ENCODE measurements at regions of chr6 and their contacts with region 1.

Region 1: GRCh38 chr6:38493931-38494547 is 145.7 kb downstream of the BTBD9 start:
- DNase-seq: peak; percentile 70
- ATAC-seq: peak; percentile 53; the same call in 2 of the 3 replicates
- H3K4me3 ChIP-seq: no peak overlapping the region
- H3K27ac ChIP-seq: no peak overlapping the region
- H3K4me1 ChIP-seq: no peaks in the 10 kb centered on the region
- H3K27me3 ChIP-seq: no peaks in the 10 kb centered on the region
- CTCF ChIP-seq: peak; percentile 88
- EP300 ChIP-seq: no peak
- POLR2A ChIP-seq: no peak
- RAD21 ChIP-seq: peak; percentile 78

Region 2: GRCh38 chr6:36533321-36533720 is 1960.7 kb before region 1 on chr6:
- CTCF ChIA-PET with region 1: no interaction called
- POLR2A ChIA-PET with region 1: no interaction called
- in situ Hi-C with region 1: no loop called
- intact Hi-C with region 1: no loop called
- DNase-seq: no peak
- ATAC-seq: no peak
- H3K4me3 ChIP-seq: no peak overlapping the region
- H3K27ac ChIP-seq: no peak overlapping the region
- H3K4me1 ChIP-seq: no peaks in the 10 kb centered on the region
- H3K27me3 ChIP-seq: no peaks in the 10 kb centered on the region
- CTCF ChIP-seq: no peak
- EP300 ChIP-seq: no peak
- POLR2A ChIP-seq: no peak
- RAD21 ChIP-seq: no peak

Region 3: GRCh38 chr6:37741757-37742400 is 752.2 kb before region 1 on chr6:
- CTCF ChIA-PET with region 1: interaction called, 11 read pairs
- POLR2A ChIA-PET with region 1: no interaction called
- in situ Hi-C with region 1: loop called (anchors 25 kb)
- intact Hi-C with region 1: loop called (anchors 1 kb)
- DNase-seq: peak; percentile 30
- ATAC-seq: peak; percentile 94
- H3K4me3 ChIP-seq: peak overlapping the region in 2 of 3 experiments; percentile 36 to 38; a peak in 2 of 6 replicates
- H3K27ac ChIP-seq: no peak overlapping the region
- H3K4me1 ChIP-seq: peaks cover 9% of the 10 kb centered on the region
- H3K27me3 ChIP-seq: peaks cover 0 to 32% of the 10 kb centered on the region in 2 experiments; a peak in 2 of 5 replicates
- CTCF ChIP-seq: peak; percentile 70
- EP300 ChIP-seq: no peak
- POLR2A ChIP-seq: no peak
- RAD21 ChIP-seq: peak; percentile 79

Region 4: GRCh38 chr6:38018755-38019165 is 475.3 kb before region 1 on chr6:
- CTCF ChIA-PET with region 1: no interaction called
- POLR2A ChIA-PET with region 1: no interaction called
- in situ Hi-C with region 1: no loop called
- intact Hi-C with region 1: loop called (anchors 5 kb)
- DNase-seq: peak; percentile 72
- ATAC-seq: peak; percentile 76
- H3K4me3 ChIP-seq: no peak overlapping the region
- H3K27ac ChIP-seq: peak overlapping the region; percentile 22
- H3K4me1 ChIP-seq: peaks cover 11% of the 10 kb centered on the region
- H3K27me3 ChIP-seq: no peaks in the 10 kb centered on the region
- CTCF ChIP-seq: peak; percentile 46
- EP300 ChIP-seq: no peak
- POLR2A ChIP-seq: no peak
- RAD21 ChIP-seq: 0 out of 2 replicates have a peak, but pooled peaks have one; percentile 25

Region 5: DNA sequence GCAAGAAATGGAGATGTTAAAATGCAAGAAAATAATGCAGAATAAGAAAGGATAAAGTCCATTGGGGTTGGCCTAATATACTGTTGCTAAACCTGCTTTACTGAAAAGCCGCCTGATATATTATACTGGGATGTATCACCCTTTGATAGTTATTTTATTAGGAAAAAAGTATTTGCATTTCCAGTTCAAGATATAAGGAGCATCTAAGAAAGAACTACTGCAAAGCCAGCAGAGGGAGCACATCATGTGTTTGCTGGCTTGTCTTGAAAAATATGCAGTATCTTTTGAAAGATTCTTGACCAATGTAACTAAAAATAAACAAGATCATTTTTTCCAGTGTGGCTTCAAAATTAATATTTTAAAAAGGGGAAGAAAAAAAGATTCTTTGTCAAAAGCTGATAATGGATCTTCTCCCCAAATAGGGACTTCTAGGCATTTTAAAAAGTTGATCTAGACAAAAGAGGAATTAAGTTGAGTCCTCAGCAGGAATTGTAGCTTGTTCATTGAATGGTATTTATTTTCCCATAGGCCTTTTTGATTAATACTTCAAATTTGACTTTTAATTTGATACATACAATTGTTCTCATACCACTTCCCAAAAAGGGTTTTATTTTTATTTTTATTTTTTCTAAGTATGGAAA is 459.6 kb before region 1 on chr6:
- CTCF ChIA-PET with region 1: interaction called, 7 read pairs
- POLR2A ChIA-PET with region 1: no interaction called
- in situ Hi-C with region 1: loop called (anchors 5 kb)
- intact Hi-C with region 1: loop called (anchors 1 kb)
- DNase-seq: peak; percentile 18
- ATAC-seq: no peak
- H3K4me3 ChIP-seq: no peak overlapping the region
- H3K27ac ChIP-seq: no peak overlapping the region
- H3K4me1 ChIP-seq: peaks cover 21% of the 10 kb centered on the region
- H3K27me3 ChIP-seq: no peaks in the 10 kb centered on the region
- CTCF ChIP-seq: peak; percentile 59
- EP300 ChIP-seq: no peak
- POLR2A ChIP-seq: no peak
- RAD21 ChIP-seq: peak; percentile 42; the same call in 1 of the 2 replicates

Region 6: GRCh38 chr6:38179300-38179699 is 314.7 kb before region 1 on chr6:
- CTCF ChIA-PET with region 1: no interaction called
- POLR2A ChIA-PET with region 1: no interaction called
- in situ Hi-C with region 1: no loop called
- intact Hi-C with region 1: loop called (anchors 10 kb)
- DNase-seq: no peak
- ATAC-seq: no peak
- H3K4me3 ChIP-seq: no peak overlapping the region
- H3K27ac ChIP-seq: no peak overlapping the region
- H3K4me1 ChIP-seq: peaks cover 33% of the 10 kb centered on the region
- H3K27me3 ChIP-seq: no peaks in the 10 kb centered on the region
- CTCF ChIP-seq: no peak
- EP300 ChIP-seq: no peak
- POLR2A ChIP-seq: no peak
- RAD21 ChIP-seq: no peak

Region 7: GRCh38 chr6:38524436-38525145 is 30.6 kb after region 1 on chr6:
- CTCF ChIA-PET with region 1: no interaction called
- POLR2A ChIA-PET with region 1: no interaction called
- in situ Hi-C with region 1: no loop called
- intact Hi-C with region 1: no loop called
- DNase-seq: no peak
- ATAC-seq: no peak
- H3K4me3 ChIP-seq: no peak overlapping the region
- H3K27ac ChIP-seq: no peak overlapping the region
- H3K4me1 ChIP-seq: no peaks in the 10 kb centered on the region
- H3K27me3 ChIP-seq: no peaks in the 10 kb centered on the region
- CTCF ChIP-seq: no peak
- EP300 ChIP-seq: no peak
- POLR2A ChIP-seq: no peak
- RAD21 ChIP-seq: no peak

Region 8: DNA sequence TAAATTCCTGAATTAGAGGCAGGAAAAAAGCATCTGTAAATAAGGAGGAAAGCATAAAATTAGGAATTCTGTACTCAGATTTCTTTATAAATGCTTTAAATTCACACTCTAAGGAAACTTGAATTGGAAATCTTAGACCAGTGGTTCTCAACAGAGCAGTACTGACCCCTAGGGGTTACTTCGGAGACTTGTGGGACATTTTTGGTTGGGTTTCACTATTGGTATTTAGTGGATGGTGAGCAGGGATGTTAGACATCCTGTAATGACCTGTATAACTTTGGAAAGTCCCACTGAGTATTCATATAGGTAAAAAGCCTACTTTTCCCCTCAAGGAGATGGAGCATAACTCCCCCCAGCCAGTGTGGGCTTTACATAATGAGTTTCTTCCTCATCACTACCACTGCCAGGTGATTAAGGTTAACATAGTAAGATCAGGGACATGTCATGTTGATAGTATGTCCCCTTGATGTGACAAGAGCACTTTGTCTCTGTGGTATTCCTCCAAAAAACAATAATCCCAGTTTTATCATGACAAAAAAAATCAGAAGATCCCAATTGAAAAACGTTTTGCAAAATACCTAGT is 177.9 kb after region 1 on chr6:
- CTCF ChIA-PET with region 1: interaction called, 3 read pairs
- POLR2A ChIA-PET with region 1: no interaction called
- in situ Hi-C with region 1: no loop called
- intact Hi-C with region 1: loop called (anchors 5 kb)
- DNase-seq: peak; percentile 43
- ATAC-seq: peak; percentile 91
- H3K4me3 ChIP-seq: no peak overlapping the region
- H3K27ac ChIP-seq: no peak overlapping the region
- H3K4me1 ChIP-seq: no peaks in the 10 kb centered on the region
- H3K27me3 ChIP-seq: no peaks in the 10 kb centered on the region
- CTCF ChIP-seq: peak; percentile 71
- EP300 ChIP-seq: no peak
- POLR2A ChIP-seq: no peak
- RAD21 ChIP-seq: peak; percentile 32; the same call in 1 of the 2 replicates